ENCODE measurements at regions of chr6 and their contacts with region 1.

Region 1: GRCh38 chr6:116680975-116681808 is at the start of gene KPNA5:
- DNase-seq: peak; percentile 68 to 94
- H3K4me3 ChIP-seq: peak within 1 kb of the TSS; percentile 66 to 87
- H3K27ac ChIP-seq: peak within 1 kb of the TSS; percentile 83 to 92
- H3K4me1 ChIP-seq: peaks cover 0 to 6% of the 10 kb centered on the region in 2 donors
- H3K27me3 ChIP-seq: no peaks in the 10 kb centered on the region
- CTCF ChIP-seq: peak in 1 of 3 experiments; percentile 2
- total RNA-seq, gene KPNA5: 0.96 TPM

Region 2: GRCh38 chr6:116651916-116652315 is 29.3 kb before region 1 on chr6:
- intact Hi-C with region 1: no loop called
- DNase-seq: no peak
- H3K4me3 ChIP-seq: no peak overlapping the region
- H3K27ac ChIP-seq: no peak overlapping the region
- H3K4me1 ChIP-seq: no peaks in the 10 kb centered on the region
- H3K27me3 ChIP-seq: no peaks in the 10 kb centered on the region
- CTCF ChIP-seq: no peak

Region 3: GRCh38 chr6:116667623-116668022 is 13.6 kb before region 1 on chr6:
- intact Hi-C with region 1: loop called (anchors 1 kb)
- DNase-seq: no peak
- H3K4me3 ChIP-seq: peak overlapping the region; percentile 65 to 81
- H3K27ac ChIP-seq: no peak overlapping the region
- H3K4me1 ChIP-seq: peaks cover 0 to 20% of the 10 kb centered on the region in 2 donors
- H3K27me3 ChIP-seq: no peaks in the 10 kb centered on the region
- CTCF ChIP-seq: no peak

Region 4: GRCh38 chr6:116695401-116695800 is 14.2 kb after region 1 on chr6:
- intact Hi-C with region 1: no loop called
- DNase-seq: no peak
- H3K4me3 ChIP-seq: no peak overlapping the region
- H3K27ac ChIP-seq: no peak overlapping the region
- H3K4me1 ChIP-seq: no peaks in the 10 kb centered on the region
- H3K27me3 ChIP-seq: no peaks in the 10 kb centered on the region
- CTCF ChIP-seq: no peak

Measured in ascending aorta (tissue), 2 donors.